Dorsolateral prefrontal cortex (tissue), 120 donors: ENCODE measurements at regions of chr3 and their contacts with region 1.

Region 1: DNA sequence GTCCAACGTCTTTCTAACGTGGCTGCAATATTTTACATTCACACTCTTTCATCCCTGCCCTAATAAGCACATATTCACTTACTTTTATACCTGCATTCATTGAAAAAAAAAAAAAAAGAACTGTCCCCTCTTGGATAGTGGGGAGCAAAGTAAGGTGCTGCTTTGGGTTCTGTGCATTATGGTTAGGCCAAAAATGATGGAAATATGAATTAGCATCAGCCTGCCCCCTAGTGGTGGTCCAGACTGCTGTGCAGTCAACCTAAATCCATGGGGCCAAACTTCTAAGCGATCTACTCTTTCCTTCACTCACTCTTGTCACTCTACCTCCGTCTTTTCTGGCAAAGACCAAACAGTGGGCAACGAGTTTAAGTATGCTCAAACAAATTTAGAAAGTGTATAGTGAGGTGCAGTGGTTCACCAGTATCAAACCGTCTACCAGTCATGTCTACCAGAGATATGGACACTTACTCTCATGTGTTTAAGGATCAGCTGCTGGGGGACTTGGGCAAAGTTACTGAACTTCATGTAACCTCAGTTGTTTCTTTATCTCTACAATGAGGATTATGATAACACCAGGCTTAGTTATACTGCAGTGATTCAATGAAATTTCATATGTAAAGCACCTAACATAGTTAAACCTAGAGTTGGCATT is 61.5 kb upstream of the GRM7 start:
- DNase-seq: peak in 3 of 10 donors; percentile 5 to 45 (median 15)
- H3K4me3 ChIP-seq: no peak overlapping the region
- H3K27ac ChIP-seq: no peak overlapping the region
- H3K27me3 ChIP-seq: peaks cover 0 to 4% (median 0%) of the 10 kb centered on the region in 45 donors
- CTCF ChIP-seq: peak; percentile 51 to 81 (median 73)

Region 2: GRCh38 chr3:5304789-5305683 is 1494.4 kb before region 1 on chr3:
- intact Hi-C with region 1: loop called in 1 of 2 experiments (anchors 5 kb)
- DNase-seq: peak in 7 of 10 donors; percentile 6 to 76 (median 54)
- H3K4me3 ChIP-seq: no peak overlapping the region
- H3K27ac ChIP-seq: no peak overlapping the region
- H3K27me3 ChIP-seq: no peaks in the 10 kb centered on the region
- CTCF ChIP-seq: peak; percentile 43 to 79 (median 69)

Region 3: DNA sequence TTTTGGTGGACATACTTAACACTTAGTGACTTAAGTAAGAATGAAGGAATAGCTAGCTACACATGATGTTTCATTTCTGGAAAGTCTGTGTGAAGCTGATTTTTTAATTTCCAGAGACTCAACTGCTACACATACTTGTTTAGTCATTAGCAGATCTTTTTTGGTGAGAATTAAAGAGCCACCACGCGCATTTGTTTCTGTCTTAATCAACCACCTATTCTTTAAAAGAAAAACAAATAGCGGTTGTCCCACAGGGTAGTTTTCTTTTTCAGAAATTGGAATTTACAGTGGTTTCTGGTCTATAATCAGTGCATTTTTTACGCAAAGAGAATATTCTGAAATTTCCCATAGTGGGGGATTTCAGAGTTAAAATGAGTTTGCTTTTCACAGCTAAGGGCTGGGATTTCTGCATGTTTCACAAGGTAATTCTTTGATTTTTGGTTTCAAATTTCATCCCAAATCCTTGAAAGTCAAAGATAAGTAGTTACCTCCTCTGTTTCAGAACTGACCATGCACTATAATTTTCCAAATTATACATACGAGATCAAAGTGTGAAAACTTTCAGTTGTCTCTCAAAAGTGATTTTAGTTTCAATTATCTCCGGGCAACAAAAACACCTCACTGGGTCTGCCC is 569.5 kb before region 1 on chr3:
- intact Hi-C with region 1: no loop called
- DNase-seq: no peak
- H3K4me3 ChIP-seq: no peak overlapping the region
- H3K27ac ChIP-seq: no peak overlapping the region
- H3K27me3 ChIP-seq: no peaks in the 10 kb centered on the region
- CTCF ChIP-seq: no peak